Breast epithelium (tissue), 4 donors: ENCODE measurements at regions of chr15 and their contacts with region 1.

Region 1: GRCh38 chr15:71747128-71748083 is 62.9 kb upstream of the NR2E3 start:
- DNase-seq: no peak
- H3K4me3 ChIP-seq: no peak overlapping the region
- H3K27ac ChIP-seq: peak overlapping the region; percentile 71 to 88
- H3K4me1 ChIP-seq: no peaks in the 10 kb centered on the region
- H3K27me3 ChIP-seq: no peaks in the 10 kb centered on the region
- CTCF ChIP-seq: no peak
- POLR2A ChIP-seq: no peak

Region 2: DNA sequence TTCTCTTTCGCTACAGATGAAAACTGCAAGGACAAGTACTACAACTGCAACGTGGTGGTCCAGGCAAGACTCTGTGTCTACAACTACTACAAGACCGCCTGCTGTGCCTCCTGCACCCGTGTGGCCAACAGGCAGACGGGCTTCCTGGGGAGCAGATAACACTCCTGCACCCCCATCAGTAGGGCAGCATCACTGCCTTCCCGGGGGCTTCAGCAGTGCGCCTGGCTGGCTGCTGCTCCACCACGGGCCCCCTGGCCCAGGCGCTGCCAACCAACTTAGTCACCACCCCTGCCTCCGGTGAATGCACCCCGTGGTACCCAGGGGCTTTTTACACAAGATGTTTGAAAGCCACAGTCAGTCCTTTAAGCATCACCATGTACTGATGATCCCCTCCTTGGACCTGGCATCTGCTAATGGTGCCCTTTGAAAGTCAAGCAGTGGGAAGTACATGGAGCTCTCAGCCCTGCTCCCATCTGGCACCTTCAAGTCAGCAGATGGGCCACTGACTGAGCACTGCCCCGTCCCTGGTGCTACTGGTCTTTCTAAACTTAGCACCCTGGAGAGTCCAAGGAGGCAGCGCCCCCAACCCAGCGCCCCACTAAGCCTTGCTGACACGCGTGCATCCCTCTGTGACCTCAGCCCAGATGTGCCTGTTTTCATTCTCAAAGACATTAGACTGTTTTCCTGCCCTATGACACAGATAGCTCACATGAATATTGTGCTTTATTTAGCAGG is 30.0 kb after region 1 on chr15:
- intact Hi-C with region 1: no loop called
- DNase-seq: no peak
- H3K4me3 ChIP-seq: no peak overlapping the region
- H3K27ac ChIP-seq: no peak overlapping the region
- H3K4me1 ChIP-seq: no peaks in the 10 kb centered on the region
- H3K27me3 ChIP-seq: no peaks in the 10 kb centered on the region
- CTCF ChIP-seq: no peak
- POLR2A ChIP-seq: no peak

Region 3: GRCh38 chr15:71802770-71803169 is 55.4 kb after region 1 on chr15:
- intact Hi-C with region 1: loop called (anchors 2 kb)
- DNase-seq: no peak
- H3K4me3 ChIP-seq: no peak overlapping the region
- H3K27ac ChIP-seq: no peak overlapping the region
- H3K4me1 ChIP-seq: no peaks in the 10 kb centered on the region
- H3K27me3 ChIP-seq: no peaks in the 10 kb centered on the region
- CTCF ChIP-seq: no peak
- POLR2A ChIP-seq: no peak